GM10248 (cell line): ENCODE measurements at regions of chr14 and their contacts with region 1.

Region 1: DNA sequence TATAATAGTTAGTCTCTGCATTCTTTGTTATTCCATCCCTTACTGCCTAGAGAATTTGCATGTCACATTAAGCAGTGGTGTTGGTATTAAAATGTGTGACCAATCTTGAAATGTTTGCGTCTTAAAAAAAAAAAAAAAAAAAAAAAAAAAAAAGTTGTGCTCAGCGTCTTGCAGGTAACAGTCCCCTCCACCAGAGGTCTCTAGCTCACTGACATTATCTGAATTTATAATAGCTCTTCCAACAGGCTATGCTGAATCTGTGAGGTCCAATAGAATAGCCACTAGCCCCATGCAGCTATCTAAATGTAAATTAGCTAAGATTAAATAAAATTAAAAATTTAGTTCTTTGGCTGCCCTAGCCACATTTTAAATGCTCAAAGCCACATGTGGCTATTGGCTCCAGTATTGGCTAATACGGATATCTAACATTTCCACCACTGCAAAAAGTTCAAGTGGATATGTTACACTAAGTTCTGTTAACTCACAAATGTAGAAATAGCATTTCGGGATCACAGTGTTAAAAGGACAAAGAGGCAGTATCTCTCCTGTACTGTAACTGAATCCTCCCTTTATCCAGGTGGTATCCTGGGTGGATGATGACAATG is 28.7 kb downstream of the NKX2-8 start:
- DNase-seq: peak; percentile 33
- CTCF ChIP-seq: peak; percentile 58

Region 2: GRCh38 chr14:36524874-36525745 is 28.6 kb before region 1 on chr14:
- CTCF ChIA-PET with region 1: interaction called, 13 read pairs
- POLR2A ChIA-PET with region 1: no interaction called
- DNase-seq: peak; percentile 12
- CTCF ChIP-seq: no peak

Region 3: GRCh38 chr14:36538051-36538450 is 15.7 kb before region 1 on chr14:
- CTCF ChIA-PET with region 1: interaction called, 19 read pairs
- POLR2A ChIA-PET with region 1: no interaction called
- DNase-seq: no peak
- CTCF ChIP-seq: no peak

Region 4: GRCh38 chr14:36604757-36605505 is 51.2 kb after region 1 on chr14:
- CTCF ChIA-PET with region 1: interaction called, 45 read pairs
- POLR2A ChIA-PET with region 1: no interaction called
- DNase-seq: peak; percentile 54
- CTCF ChIP-seq: peak; percentile 76

Region 5: GRCh38 chr14:36941783-36942521 is 388.2 kb after region 1 on chr14:
- CTCF ChIA-PET with region 1: interaction called, 41 read pairs
- POLR2A ChIA-PET with region 1: interaction called, 4 read pairs
- DNase-seq: peak; percentile 35
- CTCF ChIP-seq: peak; percentile 98

Region 6: DNA sequence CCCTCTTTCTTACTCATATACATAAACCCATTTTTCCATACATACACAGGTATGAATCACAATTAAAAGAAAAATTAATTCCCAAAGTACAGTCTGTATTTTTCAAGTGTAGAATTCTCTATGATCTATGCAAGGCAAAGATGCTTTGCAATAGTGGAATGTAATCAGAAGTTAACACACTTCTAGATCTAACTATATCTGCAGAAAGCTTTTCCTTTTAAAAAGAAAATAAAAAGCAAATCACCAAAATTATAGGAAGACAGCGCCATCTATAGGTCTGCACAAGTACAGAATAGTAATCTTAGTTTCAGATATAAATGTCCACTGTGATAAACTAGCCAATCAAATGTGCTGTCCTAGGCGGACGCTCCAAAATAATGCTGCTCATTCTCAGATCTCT is 596.7 kb after region 1 on chr14:
- CTCF ChIA-PET with region 1: interaction called, 11 read pairs
- POLR2A ChIA-PET with region 1: no interaction called
- DNase-seq: no peak
- CTCF ChIP-seq: peak; percentile 17